H1 (cell line): ENCODE measurements at regions of chr14 and their contacts with region 1.

Region 1: DNA sequence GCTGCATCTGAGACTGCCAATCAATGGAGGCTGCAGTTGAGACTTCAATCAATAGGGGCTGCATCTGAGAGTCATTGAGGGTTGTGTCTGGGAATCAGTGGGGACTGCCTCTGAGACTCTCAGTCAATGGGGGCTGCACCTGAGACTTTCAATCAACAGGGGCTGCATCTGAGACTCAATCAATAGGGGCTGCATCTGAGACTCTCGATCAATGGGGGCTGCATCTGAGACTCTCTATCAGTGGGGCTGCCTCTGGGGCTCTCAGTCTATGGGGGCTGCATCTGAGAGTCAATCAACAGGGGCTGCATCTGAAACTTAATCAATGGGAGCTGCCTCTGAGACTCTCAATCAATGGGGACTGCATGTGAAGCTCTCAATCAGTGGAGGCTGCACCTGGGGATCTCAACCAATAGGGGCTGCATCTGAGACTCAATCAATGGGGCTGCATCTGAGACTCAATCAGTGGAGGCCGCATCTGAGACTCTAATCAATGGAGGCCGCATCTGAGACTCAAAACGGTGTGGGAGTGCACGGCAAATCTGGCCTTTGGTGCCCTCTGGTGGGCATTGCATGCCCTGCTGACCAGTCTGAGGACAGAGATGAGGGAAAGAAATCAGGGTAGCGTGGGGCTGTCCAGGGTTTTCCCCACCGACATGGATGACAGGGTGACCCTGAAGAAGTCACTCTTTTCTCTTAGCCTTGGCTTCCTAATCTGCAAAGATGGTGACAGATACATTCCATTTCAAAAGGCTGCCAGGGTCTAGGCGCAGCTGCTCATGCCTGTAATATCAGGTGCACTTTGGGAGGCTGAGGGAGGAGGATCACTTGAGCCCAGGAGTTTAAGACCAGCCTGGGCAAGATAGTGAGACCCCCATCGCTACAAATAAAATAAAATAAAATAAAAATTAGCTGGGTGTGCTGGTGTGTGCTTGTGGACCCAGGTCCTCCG is 41.3 kb upstream of the EIF5 start:
- DNase-seq: peak in 1 of 2 experiments; percentile 92
- H3K4me3 ChIP-seq: no peak overlapping the region
- H3K27ac ChIP-seq: no peak overlapping the region
- H3K4me1 ChIP-seq: peaks cover 0 to under 1% (median under 1%) of the 10 kb centered on the region in 4 experiments; a peak in 2 of 7 replicates
- H3K27me3 ChIP-seq: no peaks in the 10 kb centered on the region; a peak in 1 of 7 replicates
- CTCF ChIP-seq: peak; percentile 93 to 97 (median 93)
- EP300 ChIP-seq: no peak
- POLR2A ChIP-seq: no peak
- RAD21 ChIP-seq: peak; percentile 96 to 98

Region 2: GRCh38 chr14:103078093-103078749 is 214.5 kb before region 1 on chr14:
- CTCF ChIA-PET with region 1: interaction called, 67 read pairs
- POLR2A ChIA-PET with region 1: no interaction called
- DNase-seq: peak in 1 of 2 experiments; percentile 60
- H3K4me3 ChIP-seq: no peak overlapping the region
- H3K27ac ChIP-seq: no peak overlapping the region
- H3K4me1 ChIP-seq: peaks cover 0 to 6% (median 0%) of the 10 kb centered on the region in 4 experiments; a peak in 2 of 7 replicates
- H3K27me3 ChIP-seq: peaks cover 0 to 11% (median 6%) of the 10 kb centered on the region in 4 experiments; a peak in 3 of 7 replicates
- CTCF ChIP-seq: peak; percentile 89 to 90 (median 89)
- EP300 ChIP-seq: no peak
- POLR2A ChIP-seq: no peak
- RAD21 ChIP-seq: peak; percentile 93 to 94

Region 3: DNA sequence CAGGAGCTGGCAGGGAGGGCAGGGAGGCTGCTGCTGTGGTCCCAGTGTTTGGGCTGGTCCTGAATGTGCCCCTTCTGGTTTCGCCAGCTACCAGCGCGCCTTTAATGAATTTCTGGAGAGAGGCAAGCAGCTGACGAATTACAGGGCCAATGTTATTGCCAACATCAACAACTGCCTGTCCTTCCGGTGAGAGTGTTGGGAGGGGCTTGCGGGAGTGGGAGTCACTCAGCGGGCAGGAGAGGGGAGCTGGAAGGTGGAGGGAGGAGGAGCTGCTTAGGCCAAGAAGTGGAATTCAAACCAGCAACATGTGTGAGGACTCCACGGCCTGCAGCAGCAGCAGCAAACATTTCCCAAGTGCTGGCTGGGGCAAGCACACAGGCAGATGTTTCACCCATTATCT is 161.7 kb before region 1 on chr14:
- CTCF ChIA-PET with region 1: interaction called, 29 read pairs
- POLR2A ChIA-PET with region 1: no interaction called
- DNase-seq: no peak
- H3K4me3 ChIP-seq: no peak overlapping the region
- H3K27ac ChIP-seq: no peak overlapping the region
- H3K4me1 ChIP-seq: peaks cover 0 to 12% (median 7%) of the 10 kb centered on the region in 4 experiments; a peak in 4 of 7 replicates
- H3K27me3 ChIP-seq: peaks cover 0 to 18% (median 16%) of the 10 kb centered on the region in 4 experiments; a peak in 6 of 7 replicates
- CTCF ChIP-seq: no peak
- EP300 ChIP-seq: no peak
- POLR2A ChIP-seq: no peak
- RAD21 ChIP-seq: no peak

Region 4: GRCh38 chr14:103185051-103185992 is 107.4 kb before region 1 on chr14:
- CTCF ChIA-PET with region 1: interaction called, 10 read pairs
- POLR2A ChIA-PET with region 1: no interaction called
- DNase-seq: no peak
- H3K4me3 ChIP-seq: no peak overlapping the region
- H3K27ac ChIP-seq: no peak overlapping the region
- H3K4me1 ChIP-seq: peaks cover 8 to 14% (median 11%) of the 10 kb centered on the region in 4 experiments; a peak in 5 of 7 replicates
- H3K27me3 ChIP-seq: peaks cover 1 to 21% (median 19%) of the 10 kb centered on the region in 4 experiments
- CTCF ChIP-seq: peak in 2 of 3 experiments; percentile 27 to 53; a peak in 2 of 4 replicates
- EP300 ChIP-seq: no peak
- POLR2A ChIP-seq: no peak
- RAD21 ChIP-seq: peak in 1 of 2 experiments; percentile 22; a peak in 1 of 4 replicates

Region 5: DNA sequence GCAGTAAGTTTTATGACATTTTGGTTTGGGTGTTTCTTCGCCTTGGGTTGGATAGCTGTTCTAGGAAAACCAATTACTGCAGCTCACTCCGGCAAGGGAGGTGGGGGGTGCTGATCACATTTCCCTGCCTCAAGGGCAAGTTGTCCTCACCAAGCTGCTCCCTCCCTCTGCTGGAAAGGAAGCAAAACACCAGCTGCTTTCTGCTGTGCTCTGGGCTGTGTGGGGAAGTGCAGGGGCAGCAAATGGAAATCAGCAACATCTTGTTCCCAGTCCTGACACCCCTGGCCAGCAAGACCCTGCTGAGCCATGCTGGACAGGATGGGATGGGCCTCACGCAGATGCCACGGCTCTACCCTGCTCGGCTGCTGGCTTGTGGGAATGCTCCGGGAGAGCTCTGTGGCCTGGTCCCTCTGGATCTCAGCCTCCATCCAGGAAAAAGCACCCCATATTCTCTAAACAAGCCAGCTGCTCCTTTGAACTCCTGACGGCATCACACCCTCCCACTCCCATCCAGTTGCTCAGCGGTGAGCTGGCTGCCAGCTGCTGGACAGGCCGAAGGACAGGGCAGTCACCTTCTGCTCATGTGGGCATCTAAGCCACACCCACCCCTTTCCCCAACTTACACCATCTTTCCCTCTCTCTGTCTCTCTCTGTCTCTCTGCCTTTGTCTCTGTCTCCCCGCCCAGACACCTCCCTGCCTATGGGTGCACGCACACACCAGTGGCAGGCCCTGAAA is 11.0 kb before region 1 on chr14:
- CTCF ChIA-PET with region 1: interaction called, 31 read pairs
- POLR2A ChIA-PET with region 1: interaction called, 3 read pairs
- DNase-seq: no peak
- H3K4me3 ChIP-seq: no peak overlapping the region
- H3K27ac ChIP-seq: no peak overlapping the region
- H3K4me1 ChIP-seq: peaks cover 5 to 26% (median 15%) of the 10 kb centered on the region in 4 experiments
- H3K27me3 ChIP-seq: peaks cover 0 to 20% (median 11%) of the 10 kb centered on the region in 4 experiments; a peak in 5 of 7 replicates
- CTCF ChIP-seq: peak; percentile 57 to 78 (median 63)
- EP300 ChIP-seq: no peak
- POLR2A ChIP-seq: no peak
- RAD21 ChIP-seq: peak; percentile 60 to 68